Activated T-helper 2 cell treated with anti-CD3 and anti-CD28 coated beads, Interferon-gamma antibody, Interleukin-2, Interleukin-4, amounts not matched to agents 10 μg/mL and 5 μg/mL and 100 μg/mL, durations not matched to agents 14 hours and 24 hours and 36 hours (primary cell): ENCODE measurements at regions of chr1 and their contacts with region 1.

Region 1: GRCh38 chr1:33127001-33127791 is 46.2 kb downstream of the AZIN2 start:
- DNase-seq: peak; percentile 99
- H3K4me3 Mint-ChIP-seq: peak overlapping the region; percentile 96
- H3K27ac Mint-ChIP-seq: peak overlapping the region; percentile 96
- H3K4me1 Mint-ChIP-seq: peaks cover 46% of the 10 kb centered on the region
- H3K27me3 Mint-ChIP-seq: no peaks in the 10 kb centered on the region

Region 2: GRCh38 chr1:32817159-32817814 is 309.9 kb before region 1 on chr1 and contains the starts of genes S100PBP and YARS1:
- intact Hi-C with region 1: loop called (anchors 2 kb)
- DNase-seq: peak; percentile 100
- H3K4me3 Mint-ChIP-seq: peak within 1 kb of the TSS; percentile 99
- H3K27ac Mint-ChIP-seq: peak within 1 kb of the TSS; percentile 96
- H3K4me1 Mint-ChIP-seq: peaks cover 46% of the 10 kb centered on the region
- H3K27me3 Mint-ChIP-seq: no peaks in the 10 kb centered on the region
- total RNA-seq, gene S100PBP: 50.2 and 50.5 TPM in 2 replicates
- total RNA-seq, gene YARS1: 155 and 172 TPM in 2 replicates

Region 3: GRCh38 chr1:33036526-33037503 is 90.4 kb before region 1 on chr1 and contains the start of gene AK2:
- intact Hi-C with region 1: loop called (anchors 5 kb)
- DNase-seq: peak; percentile 92
- H3K4me3 Mint-ChIP-seq: peak within 1 kb of the TSS; percentile 99
- H3K27ac Mint-ChIP-seq: peak within 1 kb of the TSS; percentile 83
- H3K4me1 Mint-ChIP-seq: peaks cover 42% of the 10 kb centered on the region
- H3K27me3 Mint-ChIP-seq: no peaks in the 10 kb centered on the region
- total RNA-seq, gene AK2: 349 TPM in 2 replicates

Region 4: DNA sequence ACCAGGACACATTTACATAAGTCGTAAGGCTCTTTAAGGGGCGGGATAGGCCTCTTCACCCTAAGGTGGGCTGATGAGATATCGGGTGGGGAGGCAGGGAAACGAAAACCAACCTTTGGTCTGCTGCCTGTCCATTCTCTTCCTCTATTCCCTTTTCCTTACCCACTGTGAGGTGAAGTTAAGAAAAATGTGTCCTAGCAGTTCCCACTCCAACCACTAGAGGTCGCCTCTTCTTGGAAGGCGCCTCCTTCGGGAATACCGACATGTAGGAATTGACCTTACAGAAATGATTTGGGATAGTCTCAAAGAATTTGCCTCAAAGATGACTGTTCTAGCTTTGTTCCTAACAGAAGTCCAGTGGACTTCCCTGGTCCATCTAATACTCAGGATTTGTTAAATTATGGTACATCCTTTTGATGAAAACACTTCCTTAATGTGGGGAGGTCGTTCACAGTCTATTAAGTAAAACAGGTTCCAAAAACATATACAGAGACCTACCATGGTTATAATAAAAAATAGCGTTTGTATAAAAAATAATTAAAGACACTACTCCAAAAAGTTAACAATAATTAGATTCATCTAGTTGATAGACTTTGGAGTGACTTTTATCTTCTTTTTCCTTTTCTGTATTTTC is 32.1 kb before region 1 on chr1:
- intact Hi-C with region 1: loop called (anchors 1 kb)
- DNase-seq: no peak
- H3K4me3 Mint-ChIP-seq: no peak overlapping the region
- H3K27ac Mint-ChIP-seq: no peak overlapping the region
- H3K4me1 Mint-ChIP-seq: peaks cover 45% of the 10 kb centered on the region
- H3K27me3 Mint-ChIP-seq: no peaks in the 10 kb centered on the region

Region 5: DNA sequence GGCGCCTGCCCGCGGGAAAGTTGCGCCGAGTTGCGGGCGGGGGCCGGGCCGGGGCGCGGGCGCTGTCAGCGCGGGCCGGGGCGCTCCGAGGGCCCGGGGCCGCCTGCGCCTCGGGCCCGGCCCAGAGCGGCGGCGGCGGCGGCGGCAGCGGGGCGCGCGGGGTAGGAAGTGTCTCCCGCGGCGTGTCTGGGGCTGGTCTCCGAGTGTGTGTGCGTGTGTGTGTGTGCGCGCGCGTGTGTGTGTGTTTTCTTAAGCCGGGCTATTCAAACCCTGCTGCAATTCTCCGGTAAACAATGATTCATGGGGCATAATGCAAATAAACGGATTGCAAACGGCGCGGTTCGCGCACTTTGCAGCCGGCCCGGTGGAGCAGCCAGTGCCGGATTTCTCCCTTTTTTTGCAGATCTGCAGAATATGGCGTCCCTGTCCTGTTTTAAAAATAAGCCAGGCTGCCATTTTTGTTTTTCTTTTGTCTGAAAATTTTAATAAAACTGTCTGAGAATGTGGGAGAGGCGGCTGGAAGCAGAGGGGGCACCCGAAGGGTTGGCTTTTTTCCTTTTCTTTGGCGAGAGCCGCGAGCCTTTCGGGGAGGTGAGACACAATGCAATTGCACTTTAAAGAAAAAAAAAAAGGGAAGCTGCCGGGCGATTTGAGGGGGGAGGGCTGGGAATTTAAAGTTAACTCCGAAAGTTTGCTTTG is 129.7 kb after region 1 on chr1:
- intact Hi-C with region 1: loop called (anchors 2 kb)
- DNase-seq: peak; percentile 54
- H3K4me3 Mint-ChIP-seq: peak overlapping the region; percentile 92
- H3K27ac Mint-ChIP-seq: peak overlapping the region; percentile 94
- H3K4me1 Mint-ChIP-seq: peaks cover 24% of the 10 kb centered on the region
- H3K27me3 Mint-ChIP-seq: peaks cover 3% of the 10 kb centered on the region